ENCODE measurements at regions of chr9 and their contacts with region 1.

Region 1: DNA sequence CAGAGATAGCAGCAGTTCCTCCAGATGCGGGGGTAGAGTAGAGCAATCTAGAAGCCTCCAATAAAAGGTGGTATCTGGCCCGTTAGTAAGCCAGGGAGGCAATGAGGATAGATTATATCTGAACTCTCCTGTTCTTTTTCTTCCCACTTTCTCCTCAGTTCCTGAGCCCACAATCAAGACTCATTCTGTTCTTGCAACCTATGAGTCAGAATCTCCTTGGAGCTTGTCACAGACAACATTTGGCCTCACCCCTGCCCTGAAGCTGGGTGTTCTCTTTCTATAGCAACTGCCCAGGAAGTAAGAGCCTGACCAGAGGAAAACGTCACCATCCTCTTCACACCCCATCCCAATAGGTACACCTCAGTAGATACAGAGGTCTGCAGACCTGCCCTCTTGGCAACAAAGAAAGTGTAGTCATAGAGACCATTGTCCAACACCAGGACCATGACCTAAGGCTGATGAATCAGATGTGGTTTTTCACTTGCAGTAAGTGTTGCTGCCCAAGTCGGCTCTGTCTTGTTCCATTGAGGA is 76.3 kb upstream of the PCA3 start:
- DNase-seq: peak in 2 of 14 experiments; percentile 7 to 35
- ATAC-seq: no peak
- H3K4me3 ChIP-seq: no peak overlapping the region
- H3K4me3 Mint-ChIP-seq: no peak overlapping the region
- H3K27ac ChIP-seq: no peak overlapping the region
- H3K27ac Mint-ChIP-seq: no peak overlapping the region
- H3K4me1 ChIP-seq: peaks cover 6% of the 10 kb centered on the region
- H3K4me1 Mint-ChIP-seq: peaks cover 8% of the 10 kb centered on the region
- H3K27me3 ChIP-seq: peaks cover 0 to 34% of the 10 kb centered on the region in 2 experiments
- H3K27me3 Mint-ChIP-seq: peaks cover 30% of the 10 kb centered on the region
- CTCF ChIP-seq: no peak

Region 2: GRCh38 chr9:75615284-75615683 is 1072.6 kb before region 1 on chr9:
- CTCF ChIA-PET with region 1: no interaction called
- POLR2A ChIA-PET with region 1: no interaction called
- intact Hi-C with region 1: loop called in 1 of 2 experiments (anchors 5 kb)
- DNase-seq: no peak
- ATAC-seq: no peak
- H3K4me3 ChIP-seq: no peak overlapping the region
- H3K4me3 Mint-ChIP-seq: no peak overlapping the region
- H3K27ac ChIP-seq: no peak overlapping the region
- H3K27ac Mint-ChIP-seq: no peak overlapping the region
- H3K4me1 ChIP-seq: no peaks in the 10 kb centered on the region
- H3K4me1 Mint-ChIP-seq: no peaks in the 10 kb centered on the region
- H3K27me3 ChIP-seq: no peaks in the 10 kb centered on the region
- H3K27me3 Mint-ChIP-seq: peaks cover 28% of the 10 kb centered on the region
- CTCF ChIP-seq: no peak

Region 3: GRCh38 chr9:76662476-76663281 is 25.2 kb before region 1 on chr9:
- CTCF ChIA-PET with region 1: no interaction called
- POLR2A ChIA-PET with region 1: no interaction called
- intact Hi-C with region 1: no loop called
- DNase-seq: no peak
- ATAC-seq: no peak
- H3K4me3 ChIP-seq: no peak overlapping the region
- H3K4me3 Mint-ChIP-seq: no peak overlapping the region
- H3K27ac ChIP-seq: no peak overlapping the region
- H3K27ac Mint-ChIP-seq: no peak overlapping the region
- H3K4me1 ChIP-seq: peaks cover 2% of the 10 kb centered on the region
- H3K4me1 Mint-ChIP-seq: peaks cover 6% of the 10 kb centered on the region
- H3K27me3 ChIP-seq: no peaks in the 10 kb centered on the region
- H3K27me3 Mint-ChIP-seq: peaks cover 4% of the 10 kb centered on the region
- CTCF ChIP-seq: no peak